G401 (cell line): ENCODE measurements at regions of chr3 and their contacts with region 1.

Region 1: GRCh38 chr3:164940737-164941136 is 137.6 kb downstream of the SI start:
- DNase-seq: no peak

Region 2: GRCh38 chr3:164864454-164864853 is 76.3 kb before region 1 on chr3:
- in situ Hi-C with region 1: loop called (anchors 10 kb)
- DNase-seq: no peak

Region 3: DNA sequence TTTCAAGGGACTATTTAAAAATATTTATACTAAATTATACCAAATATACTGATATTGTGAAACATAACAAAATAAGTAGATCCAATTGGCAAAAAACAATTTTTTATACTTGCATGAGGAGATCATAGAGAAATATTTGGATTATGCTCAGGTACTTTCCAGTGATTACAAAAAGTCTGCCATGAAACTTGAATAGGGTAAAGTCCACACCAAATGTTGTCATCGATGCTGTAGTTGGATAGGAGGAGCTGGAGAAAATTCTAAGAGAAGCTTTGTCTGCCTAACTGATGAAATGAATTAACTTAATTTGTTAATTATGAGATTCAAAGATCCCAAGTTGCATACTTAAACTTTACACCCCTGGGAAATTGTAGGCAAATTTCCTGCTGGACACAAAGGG is 44.2 kb after region 1 on chr3:
- in situ Hi-C with region 1: no loop called
- DNase-seq: no peak